CD4-positive, alpha-beta memory T cell (primary cell): ENCODE measurements at regions of chr18 and their contacts with region 1.

Region 1: DNA sequence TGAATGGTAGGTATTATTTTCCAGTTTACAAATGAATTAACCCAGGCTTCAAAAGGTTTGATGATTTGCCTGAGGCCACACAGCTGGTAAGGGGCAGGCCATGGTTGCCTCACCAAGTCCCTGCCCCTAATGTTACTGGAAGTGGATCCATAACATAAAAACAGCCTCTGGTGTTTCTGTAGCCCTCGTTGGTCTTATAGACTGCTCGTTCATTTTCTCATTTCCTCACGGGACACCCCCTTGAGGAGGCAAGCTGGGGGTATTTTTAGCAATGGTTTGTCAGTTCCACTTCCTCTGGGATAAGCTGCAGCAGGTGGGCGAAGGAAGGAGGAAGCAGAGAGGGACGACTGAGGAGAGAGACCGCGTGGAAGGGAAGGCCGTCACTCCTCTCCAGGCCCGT is 32.9 kb upstream of the NDUFV2 start:
- DNase-seq: no peak
- H3K4me3 ChIP-seq: no peak overlapping the region
- H3K4me3 Mint-ChIP-seq: no peak overlapping the region
- H3K27ac ChIP-seq: no peak overlapping the region
- H3K27ac Mint-ChIP-seq: peak overlapping the region in 1 of 7 donors; percentile 58
- H3K4me1 ChIP-seq: peaks cover 9% of the 10 kb centered on the region
- H3K4me1 Mint-ChIP-seq: peaks cover 6 to 21% (median 14%) of the 10 kb centered on the region in 4 donors
- H3K27me3 ChIP-seq: no peaks in the 10 kb centered on the region
- H3K27me3 Mint-ChIP-seq: no peaks in the 10 kb centered on the region

Region 2: GRCh38 chr18:8673256-8674209 is 396.1 kb before region 1 on chr18:
- CTCF ChIA-PET with region 1: no interaction called
- POLR2A ChIA-PET with region 1: no interaction called
- intact Hi-C with region 1: no loop called
- DNase-seq: no peak
- H3K4me3 ChIP-seq: no peak overlapping the region
- H3K4me3 Mint-ChIP-seq: no peak overlapping the region
- H3K27ac ChIP-seq: no peak overlapping the region
- H3K27ac Mint-ChIP-seq: no peak overlapping the region
- H3K4me1 ChIP-seq: no peaks in the 10 kb centered on the region
- H3K4me1 Mint-ChIP-seq: no peaks in the 10 kb centered on the region
- H3K27me3 ChIP-seq: no peaks in the 10 kb centered on the region
- H3K27me3 Mint-ChIP-seq: peaks cover 2% of the 10 kb centered on the region in 2 donors

Region 3: GRCh38 chr18:9025091-9025838 is 44.3 kb before region 1 on chr18:
- CTCF ChIA-PET with region 1: no interaction called
- POLR2A ChIA-PET with region 1: no interaction called
- intact Hi-C with region 1: no loop called
- DNase-seq: no peak
- H3K4me3 ChIP-seq: no peak overlapping the region
- H3K4me3 Mint-ChIP-seq: no peak overlapping the region
- H3K27ac ChIP-seq: no peak overlapping the region
- H3K27ac Mint-ChIP-seq: no peak overlapping the region
- H3K4me1 ChIP-seq: no peaks in the 10 kb centered on the region
- H3K4me1 Mint-ChIP-seq: peaks cover 0 to 1% (median 0%) of the 10 kb centered on the region in 4 donors
- H3K27me3 ChIP-seq: no peaks in the 10 kb centered on the region
- H3K27me3 Mint-ChIP-seq: peaks cover 5 to 9% of the 10 kb centered on the region in 2 donors

Region 4: GRCh38 chr18:9082711-9083510 is 13.3 kb after region 1 on chr18:
- CTCF ChIA-PET with region 1: interaction called, 41 read pairs
- POLR2A ChIA-PET with region 1: interaction called, 20 read pairs
- intact Hi-C with region 1: no loop called
- DNase-seq: peak; percentile 53 to 81 (median 66)
- H3K4me3 ChIP-seq: peak overlapping the region in 1 of 2 donors; percentile 25
- H3K4me3 Mint-ChIP-seq: peak overlapping the region; percentile 43 to 84 (median 68)
- H3K27ac ChIP-seq: peak overlapping the region; percentile 58
- H3K27ac Mint-ChIP-seq: peak overlapping the region; percentile 92 to 97 (median 95)
- H3K4me1 ChIP-seq: peaks cover 54% of the 10 kb centered on the region
- H3K4me1 Mint-ChIP-seq: peaks cover 27 to 50% (median 40%) of the 10 kb centered on the region in 4 donors
- H3K27me3 ChIP-seq: no peaks in the 10 kb centered on the region
- H3K27me3 Mint-ChIP-seq: no peaks in the 10 kb centered on the region

Region 5: GRCh38 chr18:9095297-9096006 is 25.9 kb after region 1 on chr18:
- CTCF ChIA-PET with region 1: interaction called, 10 read pairs
- POLR2A ChIA-PET with region 1: interaction called, 7 read pairs
- intact Hi-C with region 1: no loop called
- DNase-seq: peak; percentile 55 to 72 (median 61)
- H3K4me3 ChIP-seq: peak overlapping the region in 1 of 2 donors; percentile 5
- H3K4me3 Mint-ChIP-seq: peak overlapping the region; percentile 52 to 89 (median 74)
- H3K27ac ChIP-seq: peak overlapping the region; percentile 54
- H3K27ac Mint-ChIP-seq: peak overlapping the region; percentile 83 to 97 (median 94)
- H3K4me1 ChIP-seq: peaks cover 53% of the 10 kb centered on the region
- H3K4me1 Mint-ChIP-seq: peaks cover 37 to 68% (median 53%) of the 10 kb centered on the region in 4 donors
- H3K27me3 ChIP-seq: no peaks in the 10 kb centered on the region
- H3K27me3 Mint-ChIP-seq: no peaks in the 10 kb centered on the region

Region 6: DNA sequence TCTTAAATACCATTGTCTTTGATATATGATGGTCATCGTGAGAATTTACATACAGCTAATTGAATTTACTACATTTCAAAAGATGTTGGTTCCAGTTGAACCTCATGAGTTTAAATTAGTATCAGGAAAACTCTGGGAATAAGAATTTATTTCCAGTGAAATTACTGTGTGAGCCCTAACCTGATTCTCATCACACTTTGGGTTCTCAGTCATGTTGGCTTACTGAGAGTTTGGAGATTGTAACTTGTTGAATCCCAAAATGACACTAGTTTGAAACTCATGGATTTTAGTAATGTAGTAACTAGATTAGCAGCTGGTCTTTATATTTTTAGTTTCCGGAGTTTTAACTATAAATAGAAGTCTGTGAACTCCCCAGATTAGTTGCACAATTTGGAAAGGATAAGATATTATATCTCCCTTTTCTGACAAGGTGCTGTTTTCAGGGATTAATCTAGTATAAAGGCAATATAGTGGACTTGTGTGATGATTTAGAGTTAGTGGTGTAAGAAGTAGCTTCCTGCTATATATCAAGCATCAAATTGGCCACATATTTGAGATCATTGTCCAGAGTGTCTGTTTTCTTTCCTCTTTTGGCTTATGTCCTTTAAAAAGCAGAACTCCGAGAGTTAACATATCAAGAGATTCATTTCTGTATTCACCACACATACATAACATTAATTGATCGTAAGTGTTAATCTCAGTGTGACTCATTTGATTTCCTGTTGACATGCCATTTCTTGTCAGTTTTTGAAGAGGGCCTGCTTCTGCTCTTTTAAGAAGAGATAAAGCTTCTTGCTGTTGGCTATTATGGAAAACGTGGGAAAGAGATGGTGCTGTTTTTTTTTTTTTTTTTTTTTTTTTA is 48.6 kb after region 1 on chr18:
- CTCF ChIA-PET with region 1: interaction called, 9 read pairs
- POLR2A ChIA-PET with region 1: interaction called, 21 read pairs
- intact Hi-C with region 1: no loop called
- DNase-seq: peak in 4 of 5 donors; percentile 47 to 54 (median 52)
- H3K4me3 ChIP-seq: peak overlapping the region; percentile 8 to 28
- H3K4me3 Mint-ChIP-seq: peak overlapping the region; percentile 62 to 91 (median 84)
- H3K27ac ChIP-seq: peak overlapping the region; percentile 80
- H3K27ac Mint-ChIP-seq: peak overlapping the region; percentile 96 to 100 (median 98)
- H3K4me1 ChIP-seq: peaks cover 98% of the 10 kb centered on the region
- H3K4me1 Mint-ChIP-seq: peaks cover 51 to 86% (median 69%) of the 10 kb centered on the region in 4 donors
- H3K27me3 ChIP-seq: no peaks in the 10 kb centered on the region
- H3K27me3 Mint-ChIP-seq: no peaks in the 10 kb centered on the region

Region 7: DNA sequence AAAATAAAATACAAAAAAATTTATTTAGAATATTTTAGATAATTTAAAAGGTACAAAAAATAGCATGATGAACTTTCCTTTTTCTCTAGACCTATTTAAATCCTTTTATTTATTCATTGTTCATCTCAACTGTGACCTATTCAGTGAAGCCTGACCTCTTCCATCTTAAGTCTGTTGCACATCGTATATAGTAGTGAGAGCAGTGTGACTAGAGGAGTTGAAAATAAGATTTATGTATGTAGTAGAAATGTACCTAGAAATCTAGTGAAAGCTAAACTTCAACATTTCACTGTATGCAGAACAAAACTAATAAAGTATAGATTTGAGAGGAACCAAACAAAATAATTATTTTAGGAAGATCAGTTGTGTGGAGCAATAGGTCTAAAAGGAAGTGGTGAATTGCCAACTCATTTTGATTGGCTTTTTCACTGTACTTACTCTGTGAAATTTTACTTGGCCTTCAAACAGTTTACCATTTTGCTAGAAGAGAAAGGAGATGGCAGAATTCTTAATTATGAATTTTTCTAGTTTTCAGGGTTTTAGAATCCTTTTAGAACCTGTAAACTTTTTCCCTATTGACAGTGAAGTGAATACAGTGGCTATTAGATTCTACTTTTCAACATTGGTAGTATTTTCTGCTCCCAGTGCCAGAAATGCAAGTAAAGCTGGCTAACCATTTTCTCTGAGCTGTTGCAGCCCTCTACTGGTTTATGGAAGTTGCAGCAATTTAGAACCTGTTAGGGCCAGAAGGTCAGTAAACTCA is 78.0 kb after region 1 on chr18:
- CTCF ChIA-PET with region 1: interaction called, 61 read pairs
- POLR2A ChIA-PET with region 1: interaction called, 238 read pairs
- intact Hi-C with region 1: loop called (anchors 1 kb)
- DNase-seq: peak; percentile 55 to 67 (median 61)
- H3K4me3 ChIP-seq: no peak overlapping the region
- H3K4me3 Mint-ChIP-seq: peak overlapping the region in 6 of 8 donors; percentile 33 to 82 (median 67)
- H3K27ac ChIP-seq: peak overlapping the region; percentile 34
- H3K27ac Mint-ChIP-seq: peak overlapping the region; percentile 66 to 96 (median 76)
- H3K4me1 ChIP-seq: peaks cover 92% of the 10 kb centered on the region
- H3K4me1 Mint-ChIP-seq: peaks cover 55 to 87% (median 67%) of the 10 kb centered on the region in 4 donors
- H3K27me3 ChIP-seq: no peaks in the 10 kb centered on the region
- H3K27me3 Mint-ChIP-seq: no peaks in the 10 kb centered on the region

Region 8: GRCh38 chr18:9188359-9189231 is 119.0 kb after region 1 on chr18:
- CTCF ChIA-PET with region 1: interaction called, 15 read pairs
- POLR2A ChIA-PET with region 1: no interaction called
- intact Hi-C with region 1: no loop called
- DNase-seq: no peak
- H3K4me3 ChIP-seq: no peak overlapping the region
- H3K4me3 Mint-ChIP-seq: no peak overlapping the region
- H3K27ac ChIP-seq: no peak overlapping the region
- H3K27ac Mint-ChIP-seq: peak overlapping the region in 2 of 7 donors; percentile 16 to 23
- H3K4me1 ChIP-seq: peaks cover 32% of the 10 kb centered on the region
- H3K4me1 Mint-ChIP-seq: peaks cover 31 to 77% (median 58%) of the 10 kb centered on the region in 4 donors
- H3K27me3 ChIP-seq: no peaks in the 10 kb centered on the region
- H3K27me3 Mint-ChIP-seq: no peaks in the 10 kb centered on the region

Region 9: GRCh38 chr18:9334329-9334972 is 264.9 kb after region 1 on chr18 and contains the start of gene TWSG1:
- CTCF ChIA-PET with region 1: interaction called, 8 read pairs
- POLR2A ChIA-PET with region 1: interaction called, 4 read pairs
- intact Hi-C with region 1: loop called (anchors 1 kb)
- DNase-seq: peak; percentile 90 to 94 (median 91)
- H3K4me3 ChIP-seq: peak within 1 kb of the TSS; percentile 76 to 90
- H3K4me3 Mint-ChIP-seq: peak within 1 kb of the TSS; percentile 85 to 96 (median 90)
- H3K27ac ChIP-seq: peak within 1 kb of the TSS; percentile 57
- H3K27ac Mint-ChIP-seq: peak within 1 kb of the TSS; percentile 83 to 93 (median 91)
- H3K4me1 ChIP-seq: peaks cover 17% of the 10 kb centered on the region
- H3K4me1 Mint-ChIP-seq: peaks cover 8 to 27% (median 18%) of the 10 kb centered on the region in 4 donors
- H3K27me3 ChIP-seq: no peaks in the 10 kb centered on the region
- H3K27me3 Mint-ChIP-seq: peaks cover 1 to 6% of the 10 kb centered on the region in 2 donors
- total RNA-seq, gene TWSG1: 5.1 to 6.0 TPM